ENCODE measurements at regions of chr4 and their contacts with region 1.

Region 1: DNA sequence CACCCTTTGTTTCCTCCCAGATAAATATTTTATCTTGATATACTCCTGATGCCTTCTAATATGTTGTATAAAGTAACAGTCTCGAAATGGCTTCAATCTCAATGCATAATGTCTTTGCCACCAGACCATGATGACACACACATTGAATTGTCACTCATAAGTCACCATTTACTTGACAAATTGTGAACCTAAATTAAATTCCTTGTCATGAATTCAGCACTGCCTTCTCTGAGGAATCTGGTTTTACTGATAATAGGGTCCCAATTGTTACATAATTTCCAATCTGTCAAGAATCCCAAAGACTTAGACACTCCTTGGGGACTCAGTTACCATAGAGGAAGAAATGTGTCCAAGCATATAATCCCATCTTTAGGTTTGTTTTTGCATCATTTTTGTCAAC is 82.3 kb downstream of the NWD2 start:
- DNase-seq: no peak
- ATAC-seq: no peak
- H3K4me3 ChIP-seq: no peak overlapping the region
- H3K4me3 Mint-ChIP-seq: no peak overlapping the region
- H3K27ac ChIP-seq: no peak overlapping the region
- H3K27ac Mint-ChIP-seq: no peak overlapping the region
- H3K4me1 ChIP-seq: no peaks in the 10 kb centered on the region
- H3K4me1 Mint-ChIP-seq: no peaks in the 10 kb centered on the region
- H3K27me3 ChIP-seq: no peaks in the 10 kb centered on the region
- H3K27me3 Mint-ChIP-seq: peaks cover 7% of the 10 kb centered on the region
- CTCF ChIP-seq: no peak

Region 2: DNA sequence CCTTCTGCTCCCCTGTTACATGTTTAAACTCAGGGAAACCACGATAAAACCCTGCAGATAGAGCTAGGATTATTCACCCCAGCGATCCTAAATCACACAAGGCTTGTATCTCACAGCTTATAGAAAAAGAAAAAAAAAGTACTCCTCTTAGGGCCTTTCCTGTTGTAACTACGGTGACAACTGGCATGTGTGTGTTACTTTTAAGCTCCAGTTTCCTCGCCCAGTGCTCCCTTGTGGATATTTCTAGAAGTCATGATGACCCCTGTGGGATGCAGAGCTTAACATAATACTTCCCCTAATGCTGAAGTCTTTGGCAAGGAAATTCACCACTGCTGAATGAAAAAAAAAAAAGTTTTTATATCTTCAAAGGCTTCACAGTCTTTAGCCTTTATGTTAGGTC is 32.4 kb after region 1 on chr4:
- CTCF ChIA-PET with region 1: no interaction called
- POLR2A ChIA-PET with region 1: no interaction called
- intact Hi-C with region 1: loop called in 1 of 2 experiments (anchors 1 kb)
- DNase-seq: no peak
- ATAC-seq: no peak
- H3K4me3 ChIP-seq: no peak overlapping the region
- H3K4me3 Mint-ChIP-seq: no peak overlapping the region
- H3K27ac ChIP-seq: no peak overlapping the region
- H3K27ac Mint-ChIP-seq: no peak overlapping the region
- H3K4me1 ChIP-seq: no peaks in the 10 kb centered on the region
- H3K4me1 Mint-ChIP-seq: no peaks in the 10 kb centered on the region
- H3K27me3 ChIP-seq: no peaks in the 10 kb centered on the region
- H3K27me3 Mint-ChIP-seq: peaks cover 22% of the 10 kb centered on the region
- CTCF ChIP-seq: no peak

Measured in CD8-positive, alpha-beta T cell (primary cell).